AG04450 (cell line): ENCODE measurements at regions of chr19 and their contacts with region 1.

Region 1: DNA sequence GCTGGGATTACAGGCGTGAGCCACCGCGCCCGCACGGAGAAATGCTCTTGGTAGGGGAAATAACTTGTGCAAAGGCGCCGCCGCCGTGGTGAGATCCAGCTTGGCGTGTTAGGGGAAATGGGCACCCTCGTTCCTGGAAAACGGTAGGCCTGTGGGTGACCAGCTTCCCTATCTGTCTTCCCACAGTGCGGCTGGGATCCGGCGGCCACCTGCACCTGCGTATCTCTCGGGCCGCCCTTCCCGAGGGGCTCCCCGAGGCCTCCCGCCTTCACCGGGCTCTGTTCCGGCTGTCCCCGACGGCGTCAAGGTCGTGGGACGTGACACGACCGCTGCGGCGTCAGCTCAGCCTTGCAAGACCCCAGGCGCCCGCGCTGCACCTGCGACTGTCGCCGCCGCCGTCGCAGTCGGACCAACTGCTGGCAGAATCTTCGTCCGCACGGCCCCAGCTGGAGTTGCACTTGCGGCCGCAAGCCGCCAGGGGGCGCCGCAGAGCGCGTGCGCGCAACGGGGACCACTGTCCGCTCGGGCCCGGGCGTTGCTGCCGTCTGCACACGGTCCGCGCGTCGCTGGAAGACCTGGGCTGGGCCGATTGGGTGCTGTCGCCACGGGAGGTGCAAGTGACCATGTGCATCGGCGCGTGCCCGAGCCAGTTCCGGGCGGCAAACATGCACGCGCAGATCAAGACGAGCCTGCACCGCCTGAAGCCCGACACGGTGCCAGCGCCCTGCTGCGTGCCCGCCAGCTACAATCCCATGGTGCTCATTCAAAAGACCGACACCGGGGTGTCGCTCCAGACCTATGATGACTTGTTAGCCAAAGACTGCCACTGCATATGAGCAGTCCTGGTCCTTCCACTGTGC is 2.4 kb downstream of the GDF15 start:
- DNase-seq: no peak
- H3K4me3 ChIP-seq: peak overlapping the region; percentile 77
- H3K27ac ChIP-seq: no peak overlapping the region
- H3K27me3 ChIP-seq: no peaks in the 10 kb centered on the region
- CTCF ChIP-seq: peak; percentile 80

Region 2: DNA sequence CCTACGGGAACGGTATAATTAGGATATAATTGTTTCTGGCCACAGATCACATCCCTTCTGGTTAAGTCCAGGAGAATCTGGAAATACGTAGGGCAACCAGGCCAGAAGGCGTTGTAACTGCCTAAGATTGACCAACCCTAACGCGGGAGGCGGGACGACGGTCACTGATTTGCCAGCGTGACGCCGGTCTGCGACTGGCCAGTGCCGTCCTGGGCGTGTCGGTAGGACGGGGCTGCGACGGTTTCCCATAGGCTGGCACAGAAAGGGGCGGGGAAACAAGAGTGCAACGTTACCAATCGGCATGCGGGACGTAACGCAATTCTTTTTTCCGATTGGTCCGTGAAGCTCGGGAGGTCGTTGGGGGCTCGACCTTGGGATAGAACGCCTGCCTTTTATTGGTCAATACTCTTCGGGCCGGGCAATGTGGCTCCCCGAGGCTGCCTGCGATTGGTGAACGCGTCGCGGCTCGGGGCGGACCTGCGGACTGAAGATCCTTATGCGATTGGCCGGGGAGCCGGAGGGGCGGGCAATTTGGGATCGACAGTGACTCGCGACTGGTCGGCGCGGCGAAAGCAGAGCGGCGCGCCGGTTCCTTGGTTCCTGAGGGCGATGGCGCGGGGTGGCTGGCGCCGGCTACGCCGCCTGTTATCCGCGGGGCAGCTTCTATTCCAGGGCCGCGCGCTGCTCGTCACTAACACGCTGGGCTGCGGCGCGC is 195.5 kb before region 1 on chr19 and contains the start of gene MPV17L2:
- CTCF ChIA-PET with region 1: interaction called, 13 read pairs
- POLR2A ChIA-PET with region 1: interaction called, 3 read pairs
- DNase-seq: peak; percentile 100
- H3K4me3 ChIP-seq: peak within 1 kb of the TSS; percentile 84
- H3K27ac ChIP-seq: peak within 1 kb of the TSS; percentile 90
- H3K27me3 ChIP-seq: no peaks in the 10 kb centered on the region
- CTCF ChIP-seq: no peak
- polyA plus RNA-seq, gene MPV17L2: 8.2 and 13.4 TPM in 2 replicates

Region 3: DNA sequence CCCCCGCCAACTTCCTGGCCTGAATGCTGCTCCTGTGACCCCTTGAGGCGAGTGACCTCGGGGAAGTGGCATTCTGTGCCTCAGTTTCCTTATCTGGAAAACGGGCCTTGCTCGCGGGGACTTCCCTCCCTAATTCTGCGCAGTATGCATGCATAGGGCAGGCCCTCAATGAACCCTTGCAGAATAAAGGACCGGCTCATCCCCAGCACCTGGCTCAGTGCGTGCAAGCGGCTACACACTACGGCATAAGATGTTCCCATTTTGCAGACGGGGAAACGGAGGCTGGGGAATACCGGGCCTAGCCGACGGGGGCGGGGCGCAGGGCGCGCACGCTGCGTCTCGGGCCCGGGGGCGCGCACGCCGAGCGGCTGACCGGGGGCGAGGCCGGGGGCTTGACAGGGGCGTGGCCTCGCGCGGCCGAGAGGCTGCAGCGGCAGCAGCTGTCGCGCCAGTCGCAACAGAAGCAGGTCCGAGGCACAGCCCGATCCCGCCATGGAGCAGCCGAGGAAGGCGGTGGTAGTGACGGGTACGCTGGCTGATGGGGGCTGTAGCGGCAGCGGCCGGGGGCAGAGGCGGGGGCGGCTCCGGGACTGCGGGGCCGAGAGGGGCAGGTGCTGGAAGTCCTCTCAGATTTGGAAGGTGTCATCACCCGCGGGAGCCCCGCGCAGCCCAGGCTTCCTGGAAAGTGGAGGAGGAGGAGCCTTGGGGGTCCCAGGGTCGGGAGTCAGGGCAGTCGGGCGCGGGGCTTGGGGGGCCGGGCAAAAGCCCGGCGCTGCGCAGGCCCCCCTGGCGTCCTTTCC is 47.9 kb before region 1 on chr19 and contains the start of gene PGPEP1:
- CTCF ChIA-PET with region 1: interaction called, 4 read pairs
- POLR2A ChIA-PET with region 1: interaction called, 10 read pairs
- DNase-seq: no peak
- H3K4me3 ChIP-seq: peak within 1 kb of the TSS; percentile 83
- H3K27ac ChIP-seq: no peak within 1 kb of the TSS
- H3K27me3 ChIP-seq: peaks cover 2% of the 10 kb centered on the region
- CTCF ChIP-seq: no peak
- polyA plus RNA-seq, gene PGPEP1: 22.0 and 29.1 TPM in 2 replicates

Region 4: DNA sequence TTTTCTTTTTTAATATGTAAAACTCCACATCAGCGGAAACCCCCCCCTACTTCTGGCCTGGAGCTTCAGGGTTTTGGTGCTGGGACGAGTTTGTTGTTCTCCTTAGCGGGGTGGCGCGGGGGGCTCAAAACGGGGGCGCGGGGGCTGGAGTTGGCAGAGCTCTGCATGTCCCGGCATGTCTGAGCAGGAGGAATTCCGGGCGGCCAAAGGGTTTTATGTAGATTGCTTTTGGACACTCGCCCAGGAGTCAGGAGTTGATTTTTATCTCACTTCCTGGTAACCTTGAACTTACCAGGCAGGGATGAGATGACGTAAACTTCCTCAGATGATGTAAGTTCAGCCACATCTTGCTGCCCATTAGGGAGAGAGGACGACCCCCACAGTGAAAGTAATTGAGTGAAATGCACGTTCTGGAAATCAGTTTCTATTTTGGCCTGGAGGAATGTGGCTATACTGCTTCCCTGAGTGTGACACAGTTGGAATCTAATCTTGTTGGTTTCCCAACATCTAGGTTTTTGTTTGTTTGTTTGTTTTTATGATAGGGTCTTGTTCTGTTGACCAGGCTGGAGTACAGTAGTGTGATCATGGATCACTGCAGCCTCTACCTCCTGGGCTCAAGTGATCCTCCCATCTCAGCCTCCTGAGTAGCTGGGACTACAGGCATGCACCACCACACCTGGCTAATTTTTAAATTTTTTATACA is 23.4 kb before region 1 on chr19:
- CTCF ChIA-PET with region 1: interaction called, 13 read pairs
- POLR2A ChIA-PET with region 1: interaction called, 3 read pairs
- DNase-seq: peak; percentile 97
- H3K4me3 ChIP-seq: no peak overlapping the region
- H3K27ac ChIP-seq: peak overlapping the region; percentile 98
- H3K27me3 ChIP-seq: no peaks in the 10 kb centered on the region
- CTCF ChIP-seq: no peak

Region 5: DNA sequence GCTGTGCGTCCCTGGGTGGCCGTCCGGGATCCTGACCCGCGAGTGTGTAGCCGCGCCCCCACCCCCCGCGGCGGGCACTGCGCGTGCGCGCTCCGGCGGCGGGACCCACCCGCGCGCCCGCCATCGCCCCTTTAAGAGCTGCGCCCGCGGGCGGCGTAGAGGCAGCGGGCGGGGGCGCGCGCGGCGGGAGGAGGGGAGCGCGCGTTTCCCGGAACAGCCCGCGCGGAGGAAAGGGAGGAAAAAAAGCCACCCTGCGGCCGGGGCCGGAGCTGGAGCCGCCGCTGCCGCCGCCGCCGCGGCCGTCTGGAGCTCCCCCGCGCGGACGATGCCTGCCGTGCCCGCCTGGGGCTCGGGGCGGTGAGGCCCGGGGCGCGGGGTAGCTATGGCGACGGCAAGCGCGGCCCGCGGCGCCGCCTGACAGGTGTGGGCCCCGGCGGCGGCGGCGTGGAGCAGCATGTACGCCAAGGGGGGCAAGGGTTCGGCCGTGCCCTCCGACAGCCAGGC is 30.9 kb after region 1 on chr19 and contains the start of gene SSBP4:
- CTCF ChIA-PET with region 1: interaction called, 14 read pairs
- POLR2A ChIA-PET with region 1: interaction called, 5 read pairs
- DNase-seq: no peak
- H3K4me3 ChIP-seq: peak within 1 kb of the TSS; percentile 71
- H3K27ac ChIP-seq: peak within 1 kb of the TSS; percentile 47
- H3K27me3 ChIP-seq: no peaks in the 10 kb centered on the region
- CTCF ChIP-seq: 0 out of 2 replicates have a peak, but pooled peaks have one; percentile 18
- polyA plus RNA-seq, gene SSBP4: 9.4 and 12.6 TPM in 2 replicates

Region 6: GRCh38 chr19:18478569-18479311 is 90.4 kb after region 1 on chr19:
- CTCF ChIA-PET with region 1: no interaction called
- POLR2A ChIA-PET with region 1: no interaction called
- DNase-seq: peak; percentile 58
- H3K4me3 ChIP-seq: no peak overlapping the region
- H3K27ac ChIP-seq: peak overlapping the region; percentile 87
- H3K27me3 ChIP-seq: no peaks in the 10 kb centered on the region
- CTCF ChIP-seq: no peak

Region 7: DNA sequence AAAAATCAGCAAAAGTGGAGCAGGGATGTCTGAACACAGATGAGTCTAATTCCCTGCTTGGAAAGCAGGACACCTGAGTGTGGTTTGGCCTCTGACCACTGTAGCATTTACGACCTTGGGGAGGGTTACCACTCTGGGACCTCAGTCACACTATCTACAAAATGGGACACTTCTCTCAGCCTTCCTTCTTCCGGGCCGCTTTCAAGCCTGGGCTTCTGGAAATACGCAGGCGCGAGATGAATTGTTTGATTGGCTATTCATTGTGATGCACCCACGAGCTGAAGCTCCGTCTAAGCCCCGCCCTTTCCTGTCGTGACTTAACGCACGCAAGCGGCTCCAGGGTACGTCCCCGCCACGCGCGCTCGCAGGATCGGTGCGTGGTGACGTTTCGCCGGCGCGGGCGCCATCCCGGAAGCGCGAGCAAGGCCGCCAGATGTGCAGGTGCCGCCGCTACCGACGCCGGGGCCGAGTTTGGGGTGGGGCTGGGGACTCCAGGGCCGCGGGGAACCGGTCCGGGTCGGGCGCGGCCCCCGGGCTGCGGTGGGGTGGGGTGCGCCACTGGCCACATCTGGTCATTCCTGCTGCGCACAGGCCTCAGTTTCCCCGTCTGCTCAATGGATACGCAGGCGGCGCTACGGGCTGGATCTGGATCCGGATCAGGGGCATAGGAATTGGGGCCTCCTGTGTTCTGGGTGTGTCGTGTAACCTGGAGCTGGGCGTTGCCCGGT is 169.3 kb after region 1 on chr19 and contains the start of gene KXD1:
- CTCF ChIA-PET with region 1: no interaction called
- POLR2A ChIA-PET with region 1: no interaction called
- DNase-seq: peak; percentile 98
- H3K4me3 ChIP-seq: peak within 1 kb of the TSS; percentile 99
- H3K27ac ChIP-seq: peak within 1 kb of the TSS; percentile 57
- H3K27me3 ChIP-seq: no peaks in the 10 kb centered on the region
- CTCF ChIP-seq: no peak
- polyA plus RNA-seq, gene KXD1: 77.3 and 104 TPM in 2 replicates